ENCODE measurements at regions of chr14 and their contacts with region 1.

Region 1: DNA sequence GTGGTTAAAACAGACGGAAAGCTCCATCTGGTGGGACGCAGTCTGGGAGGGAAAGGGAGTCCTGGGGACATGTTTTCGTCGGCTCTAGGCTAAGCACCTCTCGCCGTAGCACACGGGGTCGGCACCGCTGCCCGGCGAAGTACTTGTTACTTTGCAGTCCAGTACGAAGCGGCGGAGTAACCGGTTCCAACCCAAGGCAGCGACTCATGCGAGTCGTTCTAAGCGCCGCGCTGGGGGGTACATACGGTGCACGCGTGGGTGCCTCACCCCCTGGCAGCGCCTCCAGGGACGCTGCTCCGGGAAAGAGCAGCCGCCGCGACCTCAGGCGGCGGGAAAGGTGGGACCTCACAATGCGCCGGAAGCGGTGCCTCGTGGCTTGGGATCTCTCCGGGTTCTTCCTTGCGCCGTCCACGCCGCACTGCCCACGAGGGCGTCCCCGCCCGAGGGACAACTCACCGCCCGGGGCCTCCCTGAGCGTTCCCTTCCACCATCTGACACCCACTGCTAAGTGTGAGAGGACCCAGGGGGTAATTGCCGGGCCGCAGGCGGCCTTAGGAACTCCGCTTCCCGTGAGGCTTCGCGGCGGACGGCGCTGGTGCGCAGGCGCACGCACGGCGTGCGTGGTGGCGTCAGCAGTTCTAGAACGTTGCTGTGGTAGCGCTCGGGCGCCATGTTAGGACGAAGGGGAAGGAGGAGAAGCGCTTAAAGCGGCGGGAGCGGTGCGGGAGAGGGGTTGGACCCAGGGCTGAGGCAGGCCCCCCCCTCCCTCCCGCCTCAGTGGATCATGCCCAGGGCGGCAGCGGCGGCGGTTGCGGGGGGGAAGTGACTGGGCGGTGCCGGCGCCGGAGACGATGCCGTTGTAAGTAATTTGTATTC is at the start of gene PAPOLA:
- DNase-seq: peak; percentile 94 to 96 (median 95)
- H3K4me3 ChIP-seq: peak within 1 kb of the TSS; percentile 83 to 88
- H3K4me3 Mint-ChIP-seq: peak within 1 kb of the TSS; percentile 94 to 99 (median 98)
- H3K27ac ChIP-seq: peak within 1 kb of the TSS; percentile 94
- H3K27ac Mint-ChIP-seq: peak within 1 kb of the TSS; percentile 95 to 100 (median 98)
- H3K4me1 ChIP-seq: peaks cover 45% of the 10 kb centered on the region
- H3K4me1 Mint-ChIP-seq: peaks cover 28 to 57% (median 43%) of the 10 kb centered on the region in 4 donors
- H3K27me3 ChIP-seq: no peaks in the 10 kb centered on the region
- H3K27me3 Mint-ChIP-seq: peaks cover 5 to 6% of the 10 kb centered on the region in 2 donors
- total RNA-seq, gene PAPOLA: 236 to 244 TPM

Region 2: DNA sequence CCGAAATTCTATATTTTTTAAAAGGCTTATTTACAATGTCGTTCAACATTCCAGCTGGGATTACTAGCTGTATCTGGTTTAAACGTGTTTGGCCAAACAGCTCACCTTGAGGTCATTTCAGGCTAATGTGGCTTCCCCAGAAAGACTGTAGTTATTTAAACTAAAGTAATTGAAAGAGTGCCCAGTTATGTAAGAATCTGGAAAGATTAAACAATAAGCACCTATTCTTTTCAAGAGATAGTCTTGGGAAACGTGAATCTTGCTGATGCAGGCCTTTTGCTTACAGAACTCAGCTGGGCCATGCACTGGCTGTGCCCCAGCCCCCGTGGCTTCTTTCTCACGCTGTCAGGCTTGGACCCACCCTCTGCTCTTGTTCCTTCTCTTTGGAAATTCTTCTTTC is 942.8 kb before region 1 on chr14:
- CTCF ChIA-PET with region 1: no interaction called
- POLR2A ChIA-PET with region 1: no interaction called
- intact Hi-C with region 1: no loop called
- DNase-seq: no peak
- H3K4me3 ChIP-seq: no peak overlapping the region
- H3K4me3 Mint-ChIP-seq: no peak overlapping the region
- H3K27ac ChIP-seq: no peak overlapping the region
- H3K27ac Mint-ChIP-seq: peak overlapping the region in 1 of 7 donors; percentile 58
- H3K4me1 ChIP-seq: no peaks in the 10 kb centered on the region
- H3K4me1 Mint-ChIP-seq: peaks cover 3 to 5% (median 4%) of the 10 kb centered on the region in 4 donors
- H3K27me3 ChIP-seq: no peaks in the 10 kb centered on the region
- H3K27me3 Mint-ChIP-seq: peaks cover 2 to 5% of the 10 kb centered on the region in 2 donors

Region 3: GRCh38 chr14:96167224-96168148 is 334.5 kb before region 1 on chr14:
- CTCF ChIA-PET with region 1: no interaction called
- POLR2A ChIA-PET with region 1: no interaction called
- intact Hi-C with region 1: no loop called
- DNase-seq: no peak
- H3K4me3 ChIP-seq: no peak overlapping the region
- H3K4me3 Mint-ChIP-seq: no peak overlapping the region
- H3K27ac ChIP-seq: no peak overlapping the region
- H3K27ac Mint-ChIP-seq: no peak overlapping the region
- H3K4me1 ChIP-seq: no peaks in the 10 kb centered on the region
- H3K4me1 Mint-ChIP-seq: peaks cover 0 to 1% (median 0%) of the 10 kb centered on the region in 4 donors
- H3K27me3 ChIP-seq: no peaks in the 10 kb centered on the region
- H3K27me3 Mint-ChIP-seq: peaks cover 0 to 2% of the 10 kb centered on the region in 2 donors

Region 4: GRCh38 chr14:96362965-96363756 is 138.8 kb before region 1 on chr14 and contains the starts of genes ATG2B and GSKIP:
- CTCF ChIA-PET with region 1: no interaction called
- POLR2A ChIA-PET with region 1: no interaction called
- intact Hi-C with region 1: loop called (anchors 1 kb)
- DNase-seq: peak; percentile 95 to 99 (median 97)
- H3K4me3 ChIP-seq: peak within 1 kb of the TSS; percentile 82 to 92
- H3K4me3 Mint-ChIP-seq: peak within 1 kb of the TSS; percentile 83 to 95 (median 92)
- H3K27ac ChIP-seq: peak within 1 kb of the TSS; percentile 97
- H3K27ac Mint-ChIP-seq: peak within 1 kb of the TSS; percentile 84 to 97 (median 94)
- H3K4me1 ChIP-seq: peaks cover 46% of the 10 kb centered on the region
- H3K4me1 Mint-ChIP-seq: peaks cover 36 to 59% (median 49%) of the 10 kb centered on the region in 4 donors
- H3K27me3 ChIP-seq: no peaks in the 10 kb centered on the region
- H3K27me3 Mint-ChIP-seq: no peaks in the 10 kb centered on the region
- total RNA-seq, gene ATG2B: 28.4 to 37.8 TPM
- total RNA-seq, gene GSKIP: 24.3 to 25.3 TPM